Naive thymus-derived CD4-positive, alpha-beta T cell (primary cell): ENCODE measurements at regions of chr14 and their contacts with region 1.

Region 1: DNA sequence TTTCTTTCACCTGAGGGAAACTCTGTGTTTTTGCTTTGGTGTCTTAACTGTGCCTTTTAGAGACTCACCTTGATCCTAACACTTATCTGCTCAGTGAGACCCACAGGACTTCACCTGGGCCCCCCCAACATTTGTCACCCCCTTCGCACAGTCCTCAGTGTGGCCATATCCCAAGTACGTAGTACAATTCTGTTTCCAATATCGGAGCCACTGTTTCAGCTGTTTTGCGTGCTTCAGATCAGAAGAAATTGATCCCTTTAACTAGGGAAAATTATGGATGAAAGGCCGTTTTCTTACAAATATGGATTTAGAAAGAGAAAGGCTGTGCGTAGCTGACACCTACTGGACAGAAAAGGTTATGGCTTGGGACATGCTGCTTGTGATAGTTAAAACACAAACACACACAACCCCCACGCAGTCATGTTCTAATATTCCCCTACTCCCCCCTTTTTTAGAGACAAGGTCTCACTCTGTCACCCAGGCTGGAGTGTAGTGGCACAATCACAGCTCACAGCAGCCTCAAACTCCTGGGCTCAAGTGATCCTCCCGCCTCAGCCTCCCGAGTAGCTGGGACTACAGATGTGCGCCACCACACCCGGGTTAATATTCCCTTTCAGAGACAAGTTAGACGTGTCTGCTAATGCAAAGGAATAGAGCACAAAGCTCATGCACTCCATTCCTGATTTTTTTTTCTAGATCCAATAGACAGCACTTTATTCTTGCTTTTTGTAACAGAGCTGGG is 3.6 kb upstream of the SLC7A8 start:
- DNase-seq: peak in 7 of 9 donors; percentile 25 to 55 (median 36)
- ATAC-seq: peak; percentile 73
- H3K4me3 ChIP-seq: no peak overlapping the region
- H3K4me3 Mint-ChIP-seq: no peak overlapping the region
- H3K27ac ChIP-seq: no peak overlapping the region
- H3K27ac Mint-ChIP-seq: peak overlapping the region in 3 of 9 donors; percentile 12 to 65 (median 26)
- H3K4me1 ChIP-seq: peaks cover 3 to 4% of the 10 kb centered on the region in 2 donors
- H3K4me1 Mint-ChIP-seq: peaks cover 0 to 11% (median 2%) of the 10 kb centered on the region in 7 donors
- H3K27me3 ChIP-seq: no peaks in the 10 kb centered on the region
- H3K27me3 Mint-ChIP-seq: peaks cover 0 to 19% (median 0%) of the 10 kb centered on the region in 5 donors

Region 2: GRCh38 chr14:23076785-23077408 is 110.2 kb before region 1 on chr14:
- CTCF ChIA-PET with region 1: interaction called, 32 read pairs
- POLR2A ChIA-PET with region 1: no interaction called
- intact Hi-C with region 1: loop called in 1 of 2 experiments (anchors 1 kb)
- DNase-seq: peak in 5 of 9 donors; percentile 33 to 55 (median 49)
- ATAC-seq: peak; percentile 63
- H3K4me3 ChIP-seq: no peak overlapping the region
- H3K4me3 Mint-ChIP-seq: no peak overlapping the region
- H3K27ac ChIP-seq: peak overlapping the region; percentile 3
- H3K27ac Mint-ChIP-seq: peak overlapping the region in 2 of 9 donors; percentile 47 to 57
- H3K4me1 ChIP-seq: peaks cover 1 to 2% of the 10 kb centered on the region in 2 donors
- H3K4me1 Mint-ChIP-seq: peaks cover 8 to 28% (median 17%) of the 10 kb centered on the region in 7 donors
- H3K27me3 ChIP-seq: no peaks in the 10 kb centered on the region
- H3K27me3 Mint-ChIP-seq: no peaks in the 10 kb centered on the region

Region 3: DNA sequence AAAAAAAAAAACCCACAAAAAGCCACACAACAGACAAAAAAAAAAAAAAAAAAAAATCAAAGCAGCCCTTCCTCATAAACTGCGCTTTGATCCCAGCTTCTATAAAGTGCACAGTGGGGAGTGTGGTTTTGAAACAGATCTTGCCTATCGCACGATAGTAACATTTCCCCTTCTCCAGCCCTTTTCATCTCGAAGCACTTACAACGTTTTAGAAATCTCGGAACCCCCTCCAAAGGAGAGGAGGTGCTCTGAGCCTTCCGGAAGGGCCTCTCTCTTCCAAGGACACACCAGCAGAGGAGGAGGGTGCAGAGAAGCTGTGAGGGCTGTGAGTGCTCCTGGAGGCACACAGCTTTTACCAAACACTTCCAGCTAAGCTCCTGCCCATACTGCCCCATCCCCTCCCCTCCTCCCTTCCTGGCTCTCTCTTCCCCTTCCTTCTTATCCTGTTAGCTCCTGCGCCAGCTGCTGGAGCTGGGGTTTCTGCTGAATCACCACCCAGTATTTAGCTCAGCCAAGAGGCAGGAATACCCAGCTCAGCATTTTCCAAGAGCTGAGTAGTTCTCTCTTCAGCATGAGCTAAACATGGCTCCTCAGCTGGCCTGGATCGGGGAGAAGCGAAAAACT is 32.0 kb before region 1 on chr14:
- CTCF ChIA-PET with region 1: interaction called, 6 read pairs
- POLR2A ChIA-PET with region 1: no interaction called
- intact Hi-C with region 1: loop called in 1 of 2 experiments (anchors 2 kb)
- DNase-seq: peak in 5 of 9 donors; percentile 8 to 20 (median 15)
- ATAC-seq: peak; percentile 47
- H3K4me3 ChIP-seq: no peak overlapping the region
- H3K4me3 Mint-ChIP-seq: peak overlapping the region; percentile 28 to 91 (median 75)
- H3K27ac ChIP-seq: no peak overlapping the region
- H3K27ac Mint-ChIP-seq: peak overlapping the region in 8 of 9 donors; percentile 48 to 88 (median 74)
- H3K4me1 ChIP-seq: peaks cover 0 to 27% of the 10 kb centered on the region in 2 donors
- H3K4me1 Mint-ChIP-seq: peaks cover 5 to 42% (median 33%) of the 10 kb centered on the region in 7 donors
- H3K27me3 ChIP-seq: no peaks in the 10 kb centered on the region
- H3K27me3 Mint-ChIP-seq: peaks cover 0 to 15% (median 0%) of the 10 kb centered on the region in 5 donors

Region 4: GRCh38 chr14:23174276-23175184 is 12.6 kb before region 1 on chr14:
- CTCF ChIA-PET with region 1: interaction called, 13 read pairs
- POLR2A ChIA-PET with region 1: interaction called, 4 read pairs
- intact Hi-C with region 1: no loop called
- DNase-seq: no peak
- ATAC-seq: no peak
- H3K4me3 ChIP-seq: no peak overlapping the region
- H3K4me3 Mint-ChIP-seq: peak overlapping the region in 1 of 10 donors; percentile 6
- H3K27ac ChIP-seq: no peak overlapping the region
- H3K27ac Mint-ChIP-seq: peak overlapping the region in 1 of 9 donors; percentile 9
- H3K4me1 ChIP-seq: peaks cover 0 to 12% of the 10 kb centered on the region in 2 donors
- H3K4me1 Mint-ChIP-seq: peaks cover 2 to 81% (median 39%) of the 10 kb centered on the region in 7 donors
- H3K27me3 ChIP-seq: no peaks in the 10 kb centered on the region
- H3K27me3 Mint-ChIP-seq: peaks cover 0 to 35% (median 6%) of the 10 kb centered on the region in 5 donors